ENCODE measurements at regions of chr16 and their contacts with region 1.

Region 1: DNA sequence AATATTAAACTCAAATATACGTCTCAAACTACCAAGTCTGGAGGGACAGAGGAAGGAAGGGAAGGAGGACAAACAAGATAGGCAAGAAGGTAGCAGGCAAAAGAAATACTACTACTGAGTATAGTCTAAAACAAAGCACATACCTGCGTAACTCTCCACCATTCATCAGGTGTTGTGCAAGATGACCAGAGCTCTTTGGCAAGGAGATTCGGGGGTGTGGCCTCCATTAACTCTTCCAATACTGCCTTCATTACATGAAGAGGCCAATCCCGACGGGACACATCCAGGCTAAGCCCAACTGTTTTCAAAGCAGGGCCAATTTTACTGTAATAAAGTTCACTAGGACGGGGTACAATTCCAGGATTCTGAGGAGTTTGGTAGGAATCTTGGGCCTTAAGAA is 38.2 kb upstream of the ARL6IP1 start:
- DNase-seq: no peak
- H3K4me3 ChIP-seq: no peak overlapping the region
- H3K27ac ChIP-seq: peak overlapping the region in 1 of 4 donors; percentile 32
- H3K4me1 ChIP-seq: peaks cover 0 to 9% (median 4%) of the 10 kb centered on the region in 3 donors
- H3K27me3 ChIP-seq: no peaks in the 10 kb centered on the region
- CTCF ChIP-seq: no peak
- POLR2A ChIP-seq: no peak

Region 2: DNA sequence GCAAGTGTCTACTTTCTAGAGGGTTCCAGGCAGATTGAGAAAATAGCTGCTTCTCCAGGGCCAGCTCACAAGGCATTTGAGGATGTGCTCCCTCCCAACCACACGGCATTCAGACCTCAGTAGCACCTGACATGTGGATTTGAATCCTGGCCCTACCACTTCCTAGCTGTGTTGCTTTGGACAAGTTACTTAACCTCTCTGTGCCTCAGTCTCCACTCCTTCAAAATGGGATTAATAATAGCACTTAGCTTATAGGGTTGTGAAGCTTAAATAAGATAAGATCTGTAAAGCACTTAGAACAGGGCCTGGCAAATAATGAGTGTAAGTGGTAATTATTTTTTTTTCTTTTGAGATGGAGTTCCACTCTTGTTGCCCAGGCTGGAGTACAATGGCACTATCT is 256.7 kb before region 1 on chr16:
- intact Hi-C with region 1: no loop called
- DNase-seq: no peak
- H3K4me3 ChIP-seq: no peak overlapping the region
- H3K27ac ChIP-seq: no peak overlapping the region
- H3K4me1 ChIP-seq: no peaks in the 10 kb centered on the region
- H3K27me3 ChIP-seq: no peaks in the 10 kb centered on the region
- CTCF ChIP-seq: no peak
- POLR2A ChIP-seq: no peak

Region 3: GRCh38 chr16:18969050-18969854 is 129.7 kb after region 1 on chr16:
- intact Hi-C with region 1: loop called (anchors 10 kb)
- DNase-seq: no peak
- H3K4me3 ChIP-seq: peak overlapping the region in 3 of 4 donors; percentile 15 to 57 (median 24)
- H3K27ac ChIP-seq: no peak overlapping the region
- H3K4me1 ChIP-seq: peaks cover 4 to 6% (median 6%) of the 10 kb centered on the region in 3 donors
- H3K27me3 ChIP-seq: no peaks in the 10 kb centered on the region
- CTCF ChIP-seq: peak; percentile 87 to 96 (median 92)
- POLR2A ChIP-seq: no peak

Region 4: GRCh38 chr16:19005561-19006445 is 166.2 kb after region 1 on chr16:
- intact Hi-C with region 1: no loop called
- DNase-seq: peak; percentile 20
- H3K4me3 ChIP-seq: no peak overlapping the region
- H3K27ac ChIP-seq: peak overlapping the region; percentile 49 to 75 (median 70)
- H3K4me1 ChIP-seq: peaks cover 4 to 29% (median 18%) of the 10 kb centered on the region in 3 donors
- H3K27me3 ChIP-seq: no peaks in the 10 kb centered on the region
- CTCF ChIP-seq: no peak
- POLR2A ChIP-seq: no peak

Measured in esophagus squamous epithelium (tissue), 5 donors.